B cell (primary cell): ENCODE measurements at regions of chr2 and their contacts with region 1.

Region 1: GRCh38 chr2:44833171-44834069 is 108.1 kb upstream of the SIX3 start:
- DNase-seq: no peak
- ATAC-seq: no peak
- H3K4me3 ChIP-seq: no peak overlapping the region
- H3K4me3 Mint-ChIP-seq: no peak overlapping the region
- H3K27ac ChIP-seq: no peak overlapping the region
- H3K27ac Mint-ChIP-seq: no peak overlapping the region
- H3K4me1 ChIP-seq: no peaks in the 10 kb centered on the region
- H3K4me1 Mint-ChIP-seq: no peaks in the 10 kb centered on the region
- H3K27me3 ChIP-seq: peaks cover 0 to 3% (median 0%) of the 10 kb centered on the region in 4 experiments
- H3K27me3 Mint-ChIP-seq: peaks cover 6% of the 10 kb centered on the region
- CTCF ChIP-seq: no peak

Region 2: DNA sequence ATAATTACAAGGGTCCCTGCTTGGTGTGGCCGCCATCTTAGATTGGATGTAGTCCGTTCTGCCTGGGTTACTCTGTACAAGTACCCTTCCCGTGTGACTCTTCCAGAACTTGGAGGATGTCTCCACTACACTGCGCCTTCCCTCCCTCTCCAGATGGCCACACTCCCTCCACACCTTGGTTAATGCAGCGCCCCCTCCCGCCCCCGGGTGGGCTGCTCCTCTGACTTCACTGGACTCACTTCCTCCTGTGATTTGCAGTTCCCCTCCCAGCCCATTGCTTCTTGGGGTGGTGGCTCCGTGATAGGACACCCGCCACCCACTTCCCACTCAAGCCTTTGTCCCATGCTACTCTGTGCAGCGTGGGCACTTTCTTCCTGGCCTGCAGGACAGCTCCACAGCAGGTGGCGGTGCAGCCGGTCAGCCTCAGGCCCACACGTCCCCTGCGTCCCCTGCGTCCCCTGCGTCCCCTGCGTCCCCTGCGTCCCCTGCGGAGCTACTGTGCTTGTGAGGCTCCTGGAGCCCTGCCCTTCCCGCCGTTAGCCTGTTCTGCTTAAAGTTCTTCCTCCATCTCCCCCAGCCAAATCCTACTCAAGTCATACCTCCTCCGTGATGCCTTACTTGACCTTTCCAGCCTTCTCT is 22.4 kb before region 1 on chr2:
- CTCF ChIA-PET with region 1: no interaction called
- POLR2A ChIA-PET with region 1: no interaction called
- intact Hi-C with region 1: loop called (anchors 2 kb)
- DNase-seq: no peak
- ATAC-seq: no peak
- H3K4me3 ChIP-seq: no peak overlapping the region
- H3K4me3 Mint-ChIP-seq: no peak overlapping the region
- H3K27ac ChIP-seq: no peak overlapping the region
- H3K27ac Mint-ChIP-seq: no peak overlapping the region
- H3K4me1 ChIP-seq: no peaks in the 10 kb centered on the region
- H3K4me1 Mint-ChIP-seq: no peaks in the 10 kb centered on the region
- H3K27me3 ChIP-seq: peaks cover 0 to 43% (median 37%) of the 10 kb centered on the region in 4 experiments
- H3K27me3 Mint-ChIP-seq: peaks cover 82% of the 10 kb centered on the region
- CTCF ChIP-seq: no peak

Region 3: DNA sequence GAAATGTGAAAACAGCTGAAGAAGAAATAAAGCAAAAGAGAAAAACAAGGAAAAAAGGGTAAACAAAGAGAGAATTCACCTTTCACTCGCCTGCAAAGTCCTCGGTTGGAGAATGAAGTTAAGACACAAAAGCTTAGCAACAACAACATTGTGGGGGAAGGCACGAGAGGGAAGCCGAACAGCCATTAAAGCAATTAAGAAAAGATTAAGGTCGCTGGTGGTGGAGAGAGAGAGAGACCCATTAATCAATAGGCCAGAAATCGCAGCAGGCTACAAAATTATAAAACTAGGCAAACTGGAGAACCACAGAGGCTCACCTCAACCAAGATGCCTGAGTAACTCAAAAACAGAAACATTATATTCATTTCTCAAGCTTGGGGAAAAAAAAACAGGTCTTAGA is 11.9 kb before region 1 on chr2:
- CTCF ChIA-PET with region 1: no interaction called
- POLR2A ChIA-PET with region 1: no interaction called
- intact Hi-C with region 1: no loop called
- DNase-seq: no peak
- ATAC-seq: no peak
- H3K4me3 ChIP-seq: no peak overlapping the region
- H3K4me3 Mint-ChIP-seq: no peak overlapping the region
- H3K27ac ChIP-seq: no peak overlapping the region
- H3K27ac Mint-ChIP-seq: no peak overlapping the region
- H3K4me1 ChIP-seq: no peaks in the 10 kb centered on the region
- H3K4me1 Mint-ChIP-seq: no peaks in the 10 kb centered on the region
- H3K27me3 ChIP-seq: peaks cover 0 to 3% (median 0%) of the 10 kb centered on the region in 4 experiments
- H3K27me3 Mint-ChIP-seq: peaks cover 18% of the 10 kb centered on the region
- CTCF ChIP-seq: no peak